HEK293T (cell line): ENCODE measurements at regions of chr1 and their contacts with region 1.

Region 1: DNA sequence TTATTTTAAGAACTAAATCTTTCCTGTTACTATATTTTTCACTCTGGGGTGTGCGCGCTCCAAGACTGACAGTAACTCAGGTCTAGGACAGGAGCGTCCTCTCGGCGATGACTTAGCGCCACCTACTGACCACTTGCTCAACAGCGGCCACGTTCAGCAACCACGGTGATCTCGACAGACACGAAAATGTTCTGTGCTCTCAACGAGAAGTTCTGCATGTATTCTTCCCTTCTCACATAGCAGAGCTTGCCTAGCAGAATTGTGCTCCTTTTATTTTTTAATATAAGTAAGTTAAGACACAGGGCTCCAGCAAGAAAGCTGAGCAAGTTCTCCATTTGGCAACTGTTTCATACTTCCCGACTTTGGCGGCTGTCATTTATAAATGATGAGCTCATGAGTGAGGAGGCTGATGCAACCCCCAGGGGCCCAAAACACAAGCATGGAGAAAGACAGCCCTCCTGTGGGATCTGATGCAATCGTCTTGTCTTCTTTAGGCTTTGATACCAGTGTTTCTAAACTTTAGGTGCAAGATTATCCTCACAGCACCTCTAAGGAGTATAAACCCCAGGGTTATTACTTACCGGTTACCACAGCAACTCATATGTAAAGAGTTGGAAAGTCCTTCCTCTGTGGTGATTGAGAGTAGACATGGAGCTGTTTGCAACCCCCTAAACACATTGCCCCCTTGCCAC is 92.6 kb downstream of the HHIPL2 start:
- DNase-seq: peak; percentile 84

Region 2: DNA sequence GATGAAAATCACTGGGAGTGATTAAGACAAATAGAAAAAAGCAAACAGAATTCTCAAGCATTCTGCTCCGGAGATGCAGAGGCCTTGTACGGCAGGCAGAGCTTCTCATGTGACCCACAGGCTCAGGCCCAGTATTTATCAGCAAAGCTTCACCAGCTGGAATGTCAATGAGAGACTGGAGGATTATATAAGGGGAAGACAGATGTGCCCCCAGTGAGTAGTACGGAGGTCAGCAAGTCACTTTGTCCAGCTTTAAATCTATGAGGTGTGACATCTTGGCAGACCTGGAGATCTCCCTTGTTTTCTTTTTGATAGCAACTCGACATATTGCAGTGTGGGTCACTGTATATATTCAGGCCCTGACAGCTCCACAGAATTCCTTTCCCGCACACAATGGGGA is 14.3 kb before region 1 on chr1:
- CTCF ChIA-PET with region 1: interaction called, 10 read pairs
- POLR2A ChIA-PET with region 1: no interaction called
- DNase-seq: no peak

Region 3: DNA sequence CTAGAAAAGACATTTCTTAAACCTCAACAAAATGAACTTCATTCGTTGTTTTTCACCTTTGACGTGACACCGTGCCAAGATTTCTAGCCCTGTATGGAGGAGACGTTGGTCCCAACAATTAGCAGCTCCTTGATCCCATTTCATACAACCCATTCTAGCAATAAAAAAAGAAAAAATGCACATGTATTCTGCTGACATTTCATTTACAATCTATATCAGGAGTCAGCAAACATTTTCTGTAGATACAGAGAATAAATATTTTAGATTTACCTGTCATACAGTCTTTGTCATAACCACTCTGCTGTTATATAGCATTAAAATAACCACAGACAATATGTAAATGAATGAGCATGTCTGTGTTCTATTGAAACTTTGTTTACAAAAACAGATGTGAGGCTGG is 141.4 kb after region 1 on chr1:
- CTCF ChIA-PET with region 1: no interaction called
- POLR2A ChIA-PET with region 1: no interaction called
- DNase-seq: no peak